Ascending aorta (tissue), 2 donors: ENCODE measurements at regions of chr11 and their contacts with region 1.

Region 1: GRCh38 chr11:35822815-35823495 is 120.9 kb upstream of the LDLRAD3 start:
- DNase-seq: no peak
- H3K4me3 ChIP-seq: no peak overlapping the region
- H3K27ac ChIP-seq: no peak overlapping the region
- H3K4me1 ChIP-seq: no peaks in the 10 kb centered on the region
- H3K27me3 ChIP-seq: no peaks in the 10 kb centered on the region
- CTCF ChIP-seq: no peak

Region 2: GRCh38 chr11:35811775-35812174 is 11.2 kb before region 1 on chr11:
- intact Hi-C with region 1: no loop called
- DNase-seq: no peak
- H3K4me3 ChIP-seq: no peak overlapping the region
- H3K27ac ChIP-seq: no peak overlapping the region
- H3K4me1 ChIP-seq: no peaks in the 10 kb centered on the region
- H3K27me3 ChIP-seq: no peaks in the 10 kb centered on the region
- CTCF ChIP-seq: no peak

Region 3: DNA sequence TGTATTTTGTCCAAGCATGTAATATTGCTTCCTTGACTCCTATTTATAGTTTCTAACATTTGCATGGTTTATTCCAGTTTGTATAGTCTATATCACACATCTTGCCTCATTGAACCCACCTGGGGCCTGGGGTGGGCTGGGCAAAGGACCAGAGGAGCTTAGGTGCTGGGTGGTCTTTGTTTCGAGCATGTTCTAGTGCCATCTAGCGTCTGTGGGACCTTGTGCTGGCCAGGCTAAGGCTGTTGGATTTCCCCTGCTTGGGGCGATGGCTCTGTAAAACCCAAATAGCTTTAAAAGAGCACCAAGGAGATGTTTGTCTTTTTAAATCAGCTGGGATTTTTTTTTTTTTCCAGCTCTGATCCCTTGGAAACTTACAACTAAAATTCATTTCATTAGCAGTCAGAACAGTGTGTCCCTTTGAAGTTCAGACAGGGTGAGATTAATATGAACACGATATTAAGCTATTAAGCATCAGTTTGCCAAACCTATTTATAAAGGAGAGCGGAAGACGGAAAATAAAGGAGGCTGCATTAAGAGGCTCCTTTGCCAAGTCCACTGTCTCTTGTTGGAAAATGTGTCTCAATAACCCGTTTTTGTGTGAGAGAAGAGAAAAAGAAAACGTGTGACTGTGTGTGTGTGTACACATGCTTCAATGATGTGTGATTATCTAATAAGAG is 308.9 kb after region 1 on chr11:
- intact Hi-C with region 1: loop called (anchors 1 kb)
- DNase-seq: peak in 1 of 2 donors; percentile 65
- H3K4me3 ChIP-seq: no peak overlapping the region
- H3K27ac ChIP-seq: no peak overlapping the region
- H3K4me1 ChIP-seq: no peaks in the 10 kb centered on the region
- H3K27me3 ChIP-seq: no peaks in the 10 kb centered on the region
- CTCF ChIP-seq: peak in 2 of 3 experiments; percentile 56 to 75